Activated B cell treated with CpG ODN at 0.5 μM for 24 hours (primary cell): ENCODE measurements at regions of chr7 and their contacts with region 1.

Region 1: DNA sequence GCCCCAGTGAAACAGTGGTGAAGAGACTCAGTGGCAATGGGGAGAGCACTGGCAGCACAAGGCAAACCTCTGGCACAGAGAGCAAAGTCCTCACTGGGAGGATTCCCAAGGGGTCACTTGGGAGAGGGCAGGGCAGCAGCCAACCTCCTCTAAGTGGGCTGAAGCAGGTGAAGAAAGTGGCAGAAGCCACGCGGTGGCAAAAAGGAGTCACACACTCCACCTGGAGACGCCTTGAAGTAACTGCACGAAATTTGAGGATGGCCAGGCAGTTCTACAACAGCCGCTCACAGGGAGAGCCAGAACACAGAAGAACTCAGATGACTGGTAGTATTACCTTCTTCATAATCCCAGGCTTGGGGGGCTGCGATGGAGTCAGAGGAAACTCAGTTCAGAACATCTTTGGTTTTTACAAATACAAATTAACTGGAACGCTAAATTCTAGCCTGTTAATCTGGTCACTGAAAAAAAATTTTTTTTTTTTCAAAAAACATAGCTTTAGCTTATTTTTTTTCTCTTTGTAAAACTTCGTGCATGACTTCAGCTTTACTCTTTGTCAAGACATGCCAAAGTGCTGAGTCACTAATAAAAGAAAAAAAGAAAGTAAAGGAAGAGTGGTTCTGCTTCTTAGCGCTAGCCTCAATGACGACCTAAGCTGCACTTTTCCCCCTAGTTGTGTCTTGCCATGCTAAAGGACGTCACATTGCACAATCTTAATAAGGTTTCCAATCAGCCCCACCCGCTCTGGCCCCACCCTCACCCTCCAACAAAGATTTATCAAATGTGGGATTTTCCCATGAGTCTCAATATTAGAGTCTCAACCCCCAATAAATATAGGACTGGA is 435 bp upstream of the IL6 start:
- DNase-seq: peak; percentile 47
- ATAC-seq: peak; percentile 69
- H3K4me3 Mint-ChIP-seq: peak overlapping the region; percentile 94
- H3K27ac Mint-ChIP-seq: peak overlapping the region; percentile 94
- H3K4me1 Mint-ChIP-seq: peaks cover 88% of the 10 kb centered on the region
- H3K27me3 Mint-ChIP-seq: no peaks in the 10 kb centered on the region
- CTCF ChIP-seq: no peak

Region 2: GRCh38 chr7:22577396-22578001 is 149.1 kb before region 1 on chr7:
- CTCF ChIA-PET with region 1: interaction called, 14 read pairs
- POLR2A ChIA-PET with region 1: interaction called, 4 read pairs
- intact Hi-C with region 1: no loop called
- DNase-seq: no peak
- ATAC-seq: peak; percentile 28
- H3K4me3 Mint-ChIP-seq: peak overlapping the region; percentile 57
- H3K27ac Mint-ChIP-seq: peak overlapping the region; percentile 79
- H3K4me1 Mint-ChIP-seq: peaks cover 40% of the 10 kb centered on the region
- H3K27me3 Mint-ChIP-seq: no peaks in the 10 kb centered on the region
- CTCF ChIP-seq: no peak

Region 3: GRCh38 chr7:22640269-22640668 is 86.3 kb before region 1 on chr7:
- CTCF ChIA-PET with region 1: interaction called, 4 read pairs
- POLR2A ChIA-PET with region 1: interaction called, 23 read pairs
- intact Hi-C with region 1: loop called (anchors 1 kb)
- DNase-seq: no peak
- ATAC-seq: peak; percentile 91
- H3K4me3 Mint-ChIP-seq: peak overlapping the region; percentile 55
- H3K27ac Mint-ChIP-seq: peak overlapping the region; percentile 75
- H3K4me1 Mint-ChIP-seq: peaks cover 30% of the 10 kb centered on the region
- H3K27me3 Mint-ChIP-seq: no peaks in the 10 kb centered on the region
- CTCF ChIP-seq: no peak

Region 4: GRCh38 chr7:22697876-22698606 is 28.5 kb before region 1 on chr7:
- CTCF ChIA-PET with region 1: interaction called, 89 read pairs
- POLR2A ChIA-PET with region 1: interaction called, 129 read pairs
- intact Hi-C with region 1: loop called (anchors 1 kb)
- DNase-seq: no peak
- ATAC-seq: peak; percentile 74
- H3K4me3 Mint-ChIP-seq: peak overlapping the region; percentile 61
- H3K27ac Mint-ChIP-seq: peak overlapping the region; percentile 89
- H3K4me1 Mint-ChIP-seq: peaks cover 93% of the 10 kb centered on the region
- H3K27me3 Mint-ChIP-seq: no peaks in the 10 kb centered on the region
- CTCF ChIP-seq: no peak

Region 5: GRCh38 chr7:22765609-22766008 is 39.0 kb after region 1 on chr7:
- CTCF ChIA-PET with region 1: no interaction called
- POLR2A ChIA-PET with region 1: no interaction called
- intact Hi-C with region 1: no loop called
- DNase-seq: no peak
- ATAC-seq: peak; percentile 83
- H3K4me3 Mint-ChIP-seq: no peak overlapping the region
- H3K27ac Mint-ChIP-seq: peak overlapping the region; percentile 57
- H3K4me1 Mint-ChIP-seq: peaks cover 20% of the 10 kb centered on the region
- H3K27me3 Mint-ChIP-seq: no peaks in the 10 kb centered on the region
- CTCF ChIP-seq: no peak

Region 6: DNA sequence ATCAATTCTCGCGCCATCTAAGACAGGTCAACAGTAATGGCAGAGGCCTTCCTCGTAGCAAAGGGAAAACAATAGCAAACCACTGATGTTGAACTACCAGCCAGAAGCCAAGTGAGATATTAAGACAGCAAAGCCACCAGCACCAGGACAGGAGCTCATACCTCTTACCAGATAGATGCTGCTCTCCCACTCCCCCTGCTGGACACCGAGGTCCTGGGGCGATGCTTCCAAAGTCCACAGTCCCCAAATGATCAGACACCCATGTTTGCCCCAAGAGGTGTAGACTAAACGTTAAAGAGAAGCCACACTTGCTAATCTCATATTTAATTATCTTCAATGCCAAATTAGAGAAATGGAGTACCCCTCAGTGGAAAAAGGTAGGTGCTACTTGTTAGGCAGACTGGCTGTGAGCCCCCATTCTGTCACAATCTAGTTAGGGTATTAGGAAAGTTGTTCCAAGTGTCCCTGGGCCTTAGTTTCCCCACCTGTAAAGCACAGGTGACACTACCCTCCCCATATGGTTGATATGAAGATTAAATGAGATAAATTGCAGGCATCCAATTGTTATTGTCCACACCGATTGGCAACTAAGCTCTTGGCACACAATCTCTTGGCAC is 56.2 kb after region 1 on chr7:
- CTCF ChIA-PET with region 1: interaction called, 25 read pairs
- POLR2A ChIA-PET with region 1: interaction called, 8 read pairs
- intact Hi-C with region 1: loop called (anchors 1 kb)
- DNase-seq: peak; percentile 65
- ATAC-seq: peak; percentile 99
- H3K4me3 Mint-ChIP-seq: no peak overlapping the region
- H3K27ac Mint-ChIP-seq: no peak overlapping the region
- H3K4me1 Mint-ChIP-seq: no peaks in the 10 kb centered on the region
- H3K27me3 Mint-ChIP-seq: no peaks in the 10 kb centered on the region
- CTCF ChIP-seq: no peak

Region 7: DNA sequence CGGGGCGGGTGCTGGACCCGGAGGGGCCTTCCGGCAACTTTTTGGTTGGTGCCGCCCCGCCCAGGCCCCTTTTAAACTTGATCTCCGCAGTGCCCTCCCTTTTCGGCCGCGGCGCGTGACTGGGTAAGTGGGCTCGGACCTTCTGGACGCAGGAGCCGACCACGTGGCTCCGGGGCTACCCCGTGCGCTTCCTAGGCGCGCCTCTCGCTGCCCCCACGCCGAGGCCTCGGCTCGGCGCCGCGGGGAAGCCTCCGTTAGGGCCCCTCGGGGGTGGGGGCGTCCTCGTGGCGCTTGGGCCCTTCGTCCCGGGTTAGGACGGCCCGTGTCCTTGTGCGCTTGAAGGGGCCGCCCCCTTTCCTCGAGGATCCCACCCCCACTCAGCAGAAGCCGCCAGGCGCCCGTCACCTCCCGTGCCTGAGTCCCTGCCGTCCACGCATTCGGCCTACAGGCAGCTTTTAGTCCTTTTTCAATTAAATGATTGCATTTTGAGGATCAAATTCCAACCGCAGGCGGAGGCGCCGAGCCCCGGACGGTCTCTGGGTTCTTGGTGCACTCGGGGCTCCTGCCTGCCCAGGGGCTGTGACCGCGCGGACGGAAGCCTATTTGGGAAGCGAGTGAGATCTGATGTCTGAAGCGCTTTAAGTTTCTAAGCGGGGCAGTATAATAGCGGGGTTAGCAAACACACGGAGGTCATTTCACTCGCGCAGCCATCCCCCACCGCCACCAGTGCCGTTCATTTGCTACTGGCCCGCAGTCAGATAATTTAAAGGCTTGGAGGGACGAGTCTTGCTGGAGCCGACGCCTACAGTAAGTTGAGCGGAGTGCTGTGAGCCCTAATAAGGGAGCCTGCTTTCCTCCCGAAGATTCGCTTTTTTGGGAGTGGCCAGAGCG is 127.8 kb after region 1 on chr7:
- CTCF ChIA-PET with region 1: no interaction called
- POLR2A ChIA-PET with region 1: no interaction called
- intact Hi-C with region 1: loop called (anchors 5 kb)
- DNase-seq: peak; percentile 84
- ATAC-seq: peak; percentile 81
- H3K4me3 Mint-ChIP-seq: peak overlapping the region; percentile 96
- H3K27ac Mint-ChIP-seq: peak overlapping the region; percentile 91
- H3K4me1 Mint-ChIP-seq: peaks cover 54% of the 10 kb centered on the region
- H3K27me3 Mint-ChIP-seq: no peaks in the 10 kb centered on the region
- CTCF ChIP-seq: no peak

Region 8: DNA sequence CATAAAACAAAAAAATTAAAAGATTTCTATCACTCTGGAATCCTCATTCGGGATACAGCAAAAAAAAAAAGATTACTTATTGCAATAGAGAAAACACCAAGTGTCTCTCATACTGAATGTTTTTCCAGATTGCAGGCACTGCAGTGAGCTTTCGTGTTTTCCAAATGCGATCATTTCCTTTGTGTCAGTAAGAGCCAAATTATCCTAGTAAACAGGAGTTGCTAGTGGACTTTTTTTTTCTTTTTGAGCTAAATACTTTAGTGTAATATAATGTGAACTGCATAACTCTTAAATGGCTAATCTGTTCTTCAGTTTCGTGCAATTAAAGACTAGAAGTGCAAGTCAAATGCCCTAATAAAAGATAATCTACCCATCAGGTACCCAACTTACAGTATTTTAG is 140.4 kb after region 1 on chr7:
- CTCF ChIA-PET with region 1: no interaction called
- POLR2A ChIA-PET with region 1: no interaction called
- intact Hi-C with region 1: no loop called
- DNase-seq: no peak
- ATAC-seq: no peak
- H3K4me3 Mint-ChIP-seq: no peak overlapping the region
- H3K27ac Mint-ChIP-seq: no peak overlapping the region
- H3K4me1 Mint-ChIP-seq: peaks cover 50% of the 10 kb centered on the region
- H3K27me3 Mint-ChIP-seq: no peaks in the 10 kb centered on the region
- CTCF ChIP-seq: no peak

Region 9: GRCh38 chr7:23072048-23072447 is 345.5 kb after region 1 on chr7:
- CTCF ChIA-PET with region 1: no interaction called
- POLR2A ChIA-PET with region 1: no interaction called
- intact Hi-C with region 1: no loop called
- DNase-seq: no peak
- ATAC-seq: no peak
- H3K4me3 Mint-ChIP-seq: no peak overlapping the region
- H3K27ac Mint-ChIP-seq: no peak overlapping the region
- H3K4me1 Mint-ChIP-seq: no peaks in the 10 kb centered on the region
- H3K27me3 Mint-ChIP-seq: peaks cover 2% of the 10 kb centered on the region
- CTCF ChIP-seq: no peak